Natural killer cell (primary cell): ENCODE measurements at regions of chr12 and their contacts with region 1.

Region 1: GRCh38 chr12:51172515-51173431 is at the start of gene TFCP2:
- DNase-seq: peak; percentile 92 to 98
- ATAC-seq: peak; percentile 96 to 99 (median 98)
- H3K4me3 ChIP-seq: peak within 1 kb of the TSS; percentile 85
- H3K4me3 Mint-ChIP-seq: peak within 1 kb of the TSS; percentile 93
- H3K27ac ChIP-seq: peak within 1 kb of the TSS; percentile 94
- H3K27ac Mint-ChIP-seq: no peak within 1 kb of the TSS
- H3K4me1 ChIP-seq: peaks cover 22% of the 10 kb centered on the region
- H3K4me1 Mint-ChIP-seq: peaks cover 7 to 22% of the 10 kb centered on the region in 2 donors
- H3K27me3 ChIP-seq: no peaks in the 10 kb centered on the region
- H3K27me3 Mint-ChIP-seq: no peaks in the 10 kb centered on the region
- CTCF ChIP-seq: no peak
- total RNA-seq, gene TFCP2: 26.6 to 34.8 (median 34.8) TPM

Region 2: GRCh38 chr12:50504798-50505385 is 667.9 kb before region 1 on chr12 and contains the start of gene DIP2B:
- intact Hi-C with region 1: loop called (anchors 5 kb)
- DNase-seq: peak; percentile 94 to 96
- ATAC-seq: peak; percentile 93 to 98 (median 93)
- H3K4me3 ChIP-seq: peak within 1 kb of the TSS; percentile 62
- H3K4me3 Mint-ChIP-seq: peak within 1 kb of the TSS; percentile 93
- H3K27ac ChIP-seq: peak within 1 kb of the TSS; percentile 70
- H3K27ac Mint-ChIP-seq: peak within 1 kb of the TSS; percentile 80 to 92
- H3K4me1 ChIP-seq: peaks cover 20% of the 10 kb centered on the region
- H3K4me1 Mint-ChIP-seq: peaks cover 46 to 50% of the 10 kb centered on the region in 2 donors
- H3K27me3 ChIP-seq: no peaks in the 10 kb centered on the region
- H3K27me3 Mint-ChIP-seq: no peaks in the 10 kb centered on the region
- CTCF ChIP-seq: peak; percentile 88
- total RNA-seq, gene DIP2B: 17.2 to 23.2 (median 22.2) TPM

Region 3: DNA sequence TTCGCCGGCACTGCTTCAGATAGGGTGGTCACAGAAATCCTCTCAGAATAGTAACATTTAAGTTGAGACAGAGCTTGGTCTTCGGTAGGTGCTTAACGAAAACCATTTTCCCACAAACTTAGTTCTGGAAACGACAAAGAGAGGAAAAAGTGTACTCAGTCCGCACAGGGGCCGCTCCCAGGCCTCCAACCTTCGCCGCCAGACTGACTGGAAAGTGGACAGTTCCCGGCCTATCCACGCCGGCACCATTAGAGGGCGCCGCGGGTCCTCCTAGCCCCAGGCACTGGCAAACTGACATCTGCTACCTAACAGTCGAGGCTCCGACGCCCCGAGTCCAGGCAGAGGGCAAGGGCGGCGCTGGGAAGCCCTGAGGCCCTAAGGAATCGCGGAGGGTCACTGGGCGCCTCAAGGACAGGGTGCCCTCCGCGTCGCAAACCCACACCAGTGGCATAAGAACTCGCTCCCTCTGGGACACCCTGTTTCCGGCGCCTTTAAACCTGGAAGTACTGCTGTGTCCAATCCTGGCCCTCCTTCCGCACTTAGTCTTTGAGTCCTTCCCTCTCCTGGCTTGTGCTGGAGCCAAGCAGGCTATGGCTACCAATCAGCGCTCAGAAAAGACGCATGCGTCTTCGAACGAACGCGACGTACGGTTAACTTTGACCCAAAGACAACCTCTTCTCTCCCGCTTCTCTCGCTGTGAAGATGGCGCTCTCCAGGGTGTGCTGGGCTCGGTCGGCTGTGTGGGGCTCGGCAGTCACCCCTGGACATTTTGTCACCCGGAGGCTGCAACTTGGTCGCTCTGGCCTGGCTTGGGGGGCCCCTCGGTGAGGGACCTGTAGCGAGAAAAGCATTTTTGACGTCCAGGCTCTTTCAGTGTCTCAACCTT is 124.9 kb before region 1 on chr12 and contains the start of gene LETMD1:
- intact Hi-C with region 1: loop called (anchors 5 kb)
- DNase-seq: peak; percentile 84 to 98
- ATAC-seq: peak; percentile 93 to 98 (median 94)
- H3K4me3 ChIP-seq: peak within 1 kb of the TSS; percentile 63
- H3K4me3 Mint-ChIP-seq: peak within 1 kb of the TSS; percentile 91
- H3K27ac ChIP-seq: peak within 1 kb of the TSS; percentile 83
- H3K27ac Mint-ChIP-seq: peak within 1 kb of the TSS; percentile 90 to 96
- H3K4me1 ChIP-seq: peaks cover 19% of the 10 kb centered on the region
- H3K4me1 Mint-ChIP-seq: peaks cover 26 to 37% of the 10 kb centered on the region in 2 donors
- H3K27me3 ChIP-seq: no peaks in the 10 kb centered on the region
- H3K27me3 Mint-ChIP-seq: no peaks in the 10 kb centered on the region
- CTCF ChIP-seq: peak; percentile 95
- total RNA-seq, gene LETMD1: 57.1 to 71.8 (median 58.2) TPM

Region 4: GRCh38 chr12:51083126-51083833 is 89.5 kb before region 1 on chr12 and contains the start of gene CSRNP2:
- intact Hi-C with region 1: loop called (anchors 2 kb)
- DNase-seq: peak; percentile 95 to 97
- ATAC-seq: peak; percentile 98 to 100 (median 99)
- H3K4me3 ChIP-seq: peak within 1 kb of the TSS; percentile 74
- H3K4me3 Mint-ChIP-seq: peak within 1 kb of the TSS; percentile 99
- H3K27ac ChIP-seq: peak within 1 kb of the TSS; percentile 49
- H3K27ac Mint-ChIP-seq: peak within 1 kb of the TSS; percentile 90
- H3K4me1 ChIP-seq: peaks cover 17% of the 10 kb centered on the region
- H3K4me1 Mint-ChIP-seq: peaks cover 18 to 39% of the 10 kb centered on the region in 2 donors
- H3K27me3 ChIP-seq: no peaks in the 10 kb centered on the region
- H3K27me3 Mint-ChIP-seq: no peaks in the 10 kb centered on the region
- CTCF ChIP-seq: no peak
- total RNA-seq, gene CSRNP2: 21.3 to 31.7 (median 25.1) TPM

Region 5: GRCh38 chr12:51205350-51205749 is 32.6 kb after region 1 on chr12:
- intact Hi-C with region 1: no loop called
- DNase-seq: no peak
- ATAC-seq: no peak
- H3K4me3 ChIP-seq: no peak overlapping the region
- H3K4me3 Mint-ChIP-seq: no peak overlapping the region
- H3K27ac ChIP-seq: no peak overlapping the region
- H3K27ac Mint-ChIP-seq: no peak overlapping the region
- H3K4me1 ChIP-seq: no peaks in the 10 kb centered on the region
- H3K4me1 Mint-ChIP-seq: no peaks in the 10 kb centered on the region
- H3K27me3 ChIP-seq: no peaks in the 10 kb centered on the region
- H3K27me3 Mint-ChIP-seq: peaks cover 0 to 4% of the 10 kb centered on the region in 2 donors
- CTCF ChIP-seq: no peak

Region 6: GRCh38 chr12:51217968-51218606 is 45.3 kb after region 1 on chr12 and contains the start of gene POU6F1:
- intact Hi-C with region 1: loop called (anchors 1 kb)
- DNase-seq: peak; percentile 63 to 88
- ATAC-seq: peak; percentile 82 to 87 (median 84)
- H3K4me3 ChIP-seq: peak within 1 kb of the TSS; percentile 92
- H3K4me3 Mint-ChIP-seq: peak within 1 kb of the TSS; percentile 91
- H3K27ac ChIP-seq: peak within 1 kb of the TSS; percentile 88
- H3K27ac Mint-ChIP-seq: peak within 1 kb of the TSS; percentile 84 to 89
- H3K4me1 ChIP-seq: peaks cover 15% of the 10 kb centered on the region
- H3K4me1 Mint-ChIP-seq: peaks cover 6 to 7% of the 10 kb centered on the region in 2 donors
- H3K27me3 ChIP-seq: no peaks in the 10 kb centered on the region
- H3K27me3 Mint-ChIP-seq: peaks cover 0 to 3% of the 10 kb centered on the region in 2 donors
- CTCF ChIP-seq: peak; percentile 56
- total RNA-seq, gene POU6F1: 5.7 to 6.6 (median 6.0) TPM

Region 7: DNA sequence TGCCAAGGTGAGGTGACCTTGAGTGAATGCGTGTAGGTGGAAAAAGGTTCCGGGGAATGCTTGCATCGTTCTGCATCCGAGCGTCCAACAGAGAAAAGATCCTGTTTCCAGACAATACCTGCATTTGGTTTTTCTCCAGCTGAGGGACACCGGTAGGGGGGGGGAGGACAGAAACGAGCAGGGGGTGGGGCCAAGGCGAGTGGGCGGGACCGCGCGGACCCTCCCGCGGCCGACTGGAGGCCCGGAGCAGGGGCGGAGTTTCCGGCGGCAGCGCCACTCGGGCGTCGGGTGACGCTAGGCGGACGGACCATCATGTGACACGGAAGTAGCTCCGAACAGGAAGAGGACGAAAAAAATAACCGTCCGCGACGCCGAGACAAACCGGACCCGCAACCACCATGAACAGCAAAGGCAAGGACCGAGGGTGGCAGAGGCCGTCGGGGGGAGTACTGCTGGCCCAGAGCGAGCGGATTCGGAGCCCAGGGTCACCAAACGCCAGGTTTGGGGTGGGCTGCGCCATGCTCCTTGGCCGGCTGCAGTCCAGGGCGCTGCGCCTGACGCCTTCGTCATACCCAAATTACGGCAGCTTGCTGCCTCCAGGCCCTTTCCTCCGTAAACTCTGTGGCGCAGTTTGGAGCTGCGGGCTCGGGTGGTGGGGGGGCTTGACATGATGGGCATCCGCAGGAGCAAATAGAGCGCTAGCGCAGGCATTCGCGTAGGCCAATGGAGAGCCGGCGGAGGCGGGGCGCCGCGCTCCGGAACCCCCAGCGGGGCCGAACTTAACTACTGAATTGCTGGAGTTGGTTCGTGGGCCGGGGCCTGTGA is 65.9 kb after region 1 on chr12 and contains the start of gene DAZAP2:
- intact Hi-C with region 1: loop called (anchors 1 kb)
- DNase-seq: peak; percentile 91 to 98
- ATAC-seq: peak; percentile 88 to 96 (median 90)
- H3K4me3 ChIP-seq: peak within 1 kb of the TSS; percentile 100
- H3K4me3 Mint-ChIP-seq: peak within 1 kb of the TSS; percentile 97
- H3K27ac ChIP-seq: peak within 1 kb of the TSS; percentile 100
- H3K27ac Mint-ChIP-seq: peak within 1 kb of the TSS; percentile 98 to 99
- H3K4me1 ChIP-seq: peaks cover 24% of the 10 kb centered on the region
- H3K4me1 Mint-ChIP-seq: peaks cover 41 to 46% of the 10 kb centered on the region in 2 donors
- H3K27me3 ChIP-seq: no peaks in the 10 kb centered on the region
- H3K27me3 Mint-ChIP-seq: no peaks in the 10 kb centered on the region
- CTCF ChIP-seq: no peak
- total RNA-seq, gene DAZAP2: 316 to 350 (median 325) TPM